ENCODE measurements at regions of chr3 and their contacts with region 1.

Region 1: GRCh38 chr3:142787719-142788118 is 63.9 kb downstream of the TRPC1 start:
- DNase-seq: no peak
- H3K4me3 ChIP-seq: no peak overlapping the region
- H3K4me3 Mint-ChIP-seq: no peak overlapping the region
- H3K27ac Mint-ChIP-seq: no peak overlapping the region
- H3K4me1 ChIP-seq: peaks cover 18% of the 10 kb centered on the region
- H3K4me1 Mint-ChIP-seq: peaks cover 20% of the 10 kb centered on the region
- H3K27me3 ChIP-seq: no peaks in the 10 kb centered on the region
- H3K27me3 Mint-ChIP-seq: no peaks in the 10 kb centered on the region
- CTCF ChIP-seq: no peak

Region 2: GRCh38 chr3:142450189-142450588 is 337.5 kb before region 1 on chr3:
- CTCF ChIA-PET with region 1: no interaction called
- POLR2A ChIA-PET with region 1: no interaction called
- intact Hi-C with region 1: no loop called
- DNase-seq: no peak
- H3K4me3 ChIP-seq: no peak overlapping the region
- H3K4me3 Mint-ChIP-seq: no peak overlapping the region
- H3K27ac Mint-ChIP-seq: no peak overlapping the region
- H3K4me1 ChIP-seq: peaks cover 9% of the 10 kb centered on the region
- H3K4me1 Mint-ChIP-seq: no peaks in the 10 kb centered on the region
- H3K27me3 ChIP-seq: no peaks in the 10 kb centered on the region
- H3K27me3 Mint-ChIP-seq: no peaks in the 10 kb centered on the region
- CTCF ChIP-seq: no peak

Region 3: GRCh38 chr3:142754494-142754893 is 33.2 kb before region 1 on chr3:
- CTCF ChIA-PET with region 1: no interaction called
- POLR2A ChIA-PET with region 1: no interaction called
- intact Hi-C with region 1: loop called (anchors 1 kb)
- DNase-seq: no peak
- H3K4me3 ChIP-seq: no peak overlapping the region
- H3K4me3 Mint-ChIP-seq: no peak overlapping the region
- H3K27ac Mint-ChIP-seq: no peak overlapping the region
- H3K4me1 ChIP-seq: no peaks in the 10 kb centered on the region
- H3K4me1 Mint-ChIP-seq: no peaks in the 10 kb centered on the region
- H3K27me3 ChIP-seq: no peaks in the 10 kb centered on the region
- H3K27me3 Mint-ChIP-seq: no peaks in the 10 kb centered on the region
- CTCF ChIP-seq: no peak

Measured in Caco-2 (cell line).